Right ventricle myocardium superior (tissue), 1 donor: ENCODE measurements at regions of chr6 and their contacts with region 1.

Region 1: DNA sequence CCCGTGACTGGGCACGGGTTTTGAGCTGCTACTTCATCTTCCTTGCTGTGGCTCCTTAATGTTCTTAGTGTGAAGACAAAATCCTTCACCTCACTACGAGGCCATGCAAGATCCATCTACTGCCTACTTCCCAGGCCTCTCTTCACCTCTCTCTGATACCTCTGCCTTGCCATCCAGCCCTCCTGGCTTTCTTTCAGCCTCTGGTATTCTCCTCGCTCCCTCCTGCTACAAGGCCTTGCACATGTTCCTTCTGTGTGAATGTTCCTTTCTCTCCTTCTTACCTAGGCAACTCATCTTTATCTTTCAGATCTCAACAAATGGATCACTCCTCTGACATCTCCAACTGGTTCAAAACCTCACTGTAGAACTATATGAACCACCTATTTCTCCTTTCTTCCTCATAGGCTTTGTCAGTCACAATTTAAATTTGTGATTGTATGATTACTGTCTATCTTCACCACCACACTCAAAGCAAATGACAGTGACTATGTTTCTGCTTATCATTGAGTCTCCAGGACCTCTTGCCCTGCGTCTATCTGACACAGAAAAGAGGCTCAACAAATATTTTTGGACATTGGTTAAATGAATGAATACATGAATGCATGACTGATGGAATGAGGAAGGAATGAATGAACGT is 19.8 kb downstream of the HEY2 start:
- DNase-seq: no peak
- ATAC-seq: peak; percentile 29

Region 2: GRCh38 chr6:125310994-125311649 is 458.1 kb before region 1 on chr6:
- intact Hi-C with region 1: loop called (anchors 2 kb)
- DNase-seq: no peak
- ATAC-seq: peak; percentile 80

Region 3: GRCh38 chr6:125931733-125932450 is 162.6 kb after region 1 on chr6:
- intact Hi-C with region 1: no loop called
- DNase-seq: no peak
- ATAC-seq: no peak